WTC11 (cell line): ENCODE measurements at regions of chr19 and their contacts with region 1.

Region 1: DNA sequence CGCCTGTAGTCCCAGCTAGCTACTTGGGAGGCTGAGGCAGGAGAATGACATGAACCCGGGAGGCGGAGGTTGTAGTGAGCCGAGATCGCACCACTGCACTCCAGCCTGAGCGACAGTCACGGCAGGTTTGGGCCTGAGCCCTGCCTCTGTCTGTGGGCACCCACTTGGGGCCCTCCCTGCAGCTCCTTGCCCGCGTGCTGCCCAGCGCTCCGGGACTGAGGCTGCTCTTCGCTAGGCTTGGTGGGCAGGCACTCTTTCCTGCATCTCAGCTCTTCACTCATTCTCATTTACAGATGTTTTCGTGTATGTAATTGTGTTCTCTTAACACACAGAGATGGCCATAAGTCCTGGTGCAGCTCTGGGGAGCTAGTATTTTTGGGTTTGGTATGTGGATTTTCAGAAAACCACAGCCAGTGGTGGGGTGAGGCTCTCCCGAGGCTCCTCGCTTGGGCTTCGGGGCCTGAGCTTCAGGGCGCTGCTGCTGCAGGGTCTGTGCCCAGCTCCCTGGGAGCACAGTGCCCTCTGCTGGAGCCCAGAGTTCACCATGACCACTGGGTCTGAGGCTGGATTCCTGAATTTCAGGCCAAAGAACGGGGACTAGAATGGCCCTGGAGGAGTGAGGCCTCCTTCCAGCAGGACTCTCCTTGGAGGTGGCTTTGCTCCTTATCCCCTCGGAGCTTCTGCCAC is 15.2 kb downstream of the UPF1 start:
- DNase-seq: peak; percentile 87
- ATAC-seq: peak; percentile 96
- H3K4me3 Mint-ChIP-seq: no peak overlapping the region
- H3K27ac Mint-ChIP-seq: peak overlapping the region; percentile 96
- H3K4me1 Mint-ChIP-seq: peaks cover 2% of the 10 kb centered on the region
- H3K27me3 Mint-ChIP-seq: no peaks in the 10 kb centered on the region
- CTCF ChIP-seq: peak; percentile 76; the same call in 1 of the 2 replicates

Region 2: GRCh38 chr19:18450931-18451845 is 395.8 kb before region 1 on chr19:
- CTCF ChIA-PET with region 1: interaction called, 11 read pairs
- POLR2A ChIA-PET with region 1: no interaction called
- DNase-seq: peak; percentile 95
- ATAC-seq: peak; percentile 83
- H3K4me3 Mint-ChIP-seq: no peak overlapping the region
- H3K27ac Mint-ChIP-seq: no peak overlapping the region; the same call in 1 of the 2 replicates
- H3K4me1 Mint-ChIP-seq: peaks cover 3% of the 10 kb centered on the region; the same call in 1 of the 2 replicates
- H3K27me3 Mint-ChIP-seq: no peaks in the 10 kb centered on the region
- CTCF ChIP-seq: peak; percentile 98

Region 3: DNA sequence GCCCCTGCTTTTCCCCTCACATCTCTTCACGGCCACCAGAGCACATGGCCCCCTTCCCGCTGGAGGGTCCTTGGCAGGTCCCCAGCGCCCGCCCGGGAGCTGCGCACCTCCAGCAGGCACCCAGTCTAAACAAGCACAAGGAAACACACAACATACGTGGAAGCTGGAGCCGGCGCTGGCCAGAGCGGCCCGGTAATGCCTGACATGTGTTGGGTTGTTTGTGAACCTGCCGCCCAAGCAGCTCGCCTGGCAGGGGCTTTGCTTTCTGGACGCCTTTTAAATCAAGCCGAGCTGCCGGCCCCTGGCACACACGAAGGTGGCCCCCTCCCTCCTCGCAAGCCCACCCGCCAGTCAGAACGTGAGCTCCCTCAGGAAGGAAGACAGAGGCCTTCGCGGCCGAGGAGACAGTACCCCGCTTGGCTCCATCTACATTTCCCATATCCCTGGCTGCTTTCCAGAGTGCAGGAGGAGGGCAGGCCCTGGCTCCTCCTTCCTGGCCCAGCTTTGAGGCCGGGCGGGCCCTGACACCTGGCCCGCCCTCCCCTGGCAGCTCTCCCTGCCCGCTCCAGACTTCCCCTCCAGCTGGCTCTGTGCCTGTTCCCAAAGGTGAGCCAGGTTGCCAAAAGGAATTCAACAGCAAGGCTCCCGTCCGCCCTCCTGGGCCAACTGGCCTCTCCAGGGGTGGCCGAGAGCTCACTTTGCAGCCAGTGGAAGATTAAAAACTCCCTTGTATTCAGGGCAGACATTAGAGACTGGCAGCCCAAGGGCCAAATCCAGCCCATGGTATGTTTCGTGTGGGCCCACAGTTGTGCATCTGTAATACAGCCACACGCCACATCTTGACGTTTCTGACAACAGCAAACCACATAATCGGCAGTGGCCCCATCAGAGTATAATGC is 84.6 kb before region 1 on chr19:
- CTCF ChIA-PET with region 1: interaction called, 13 read pairs
- POLR2A ChIA-PET with region 1: no interaction called
- DNase-seq: peak; percentile 38
- ATAC-seq: peak; percentile 75
- H3K4me3 Mint-ChIP-seq: no peak overlapping the region
- H3K27ac Mint-ChIP-seq: no peak overlapping the region
- H3K4me1 Mint-ChIP-seq: peaks cover 2% of the 10 kb centered on the region; the same call in 1 of the 2 replicates
- H3K27me3 Mint-ChIP-seq: peaks cover 58% of the 10 kb centered on the region
- CTCF ChIP-seq: no peak

Region 4: GRCh38 chr19:18785179-18786128 is 61.6 kb before region 1 on chr19:
- CTCF ChIA-PET with region 1: interaction called, 37 read pairs
- POLR2A ChIA-PET with region 1: no interaction called
- DNase-seq: peak; percentile 98
- ATAC-seq: peak; percentile 78
- H3K4me3 Mint-ChIP-seq: peak overlapping the region; percentile 56
- H3K27ac Mint-ChIP-seq: no peak overlapping the region
- H3K4me1 Mint-ChIP-seq: peaks cover 19% of the 10 kb centered on the region
- H3K27me3 Mint-ChIP-seq: peaks cover 100% of the 10 kb centered on the region
- CTCF ChIP-seq: no peak

Region 5: GRCh38 chr19:18831524-18832305 is 15.3 kb before region 1 on chr19 and contains the start of gene UPF1:
- CTCF ChIA-PET with region 1: interaction called, 64 read pairs
- POLR2A ChIA-PET with region 1: interaction called, 4 read pairs
- DNase-seq: peak; percentile 98
- ATAC-seq: peak; percentile 72
- H3K4me3 Mint-ChIP-seq: peak within 1 kb of the TSS; percentile 94
- H3K27ac Mint-ChIP-seq: peak within 1 kb of the TSS; percentile 84
- H3K4me1 Mint-ChIP-seq: peaks cover 24% of the 10 kb centered on the region
- H3K27me3 Mint-ChIP-seq: peaks cover 33% of the 10 kb centered on the region
- CTCF ChIP-seq: no peak
- total RNA-seq, gene UPF1: 77.3 to 82.5 TPM (median 81.9 TPM) in 3 replicates

Region 6: DNA sequence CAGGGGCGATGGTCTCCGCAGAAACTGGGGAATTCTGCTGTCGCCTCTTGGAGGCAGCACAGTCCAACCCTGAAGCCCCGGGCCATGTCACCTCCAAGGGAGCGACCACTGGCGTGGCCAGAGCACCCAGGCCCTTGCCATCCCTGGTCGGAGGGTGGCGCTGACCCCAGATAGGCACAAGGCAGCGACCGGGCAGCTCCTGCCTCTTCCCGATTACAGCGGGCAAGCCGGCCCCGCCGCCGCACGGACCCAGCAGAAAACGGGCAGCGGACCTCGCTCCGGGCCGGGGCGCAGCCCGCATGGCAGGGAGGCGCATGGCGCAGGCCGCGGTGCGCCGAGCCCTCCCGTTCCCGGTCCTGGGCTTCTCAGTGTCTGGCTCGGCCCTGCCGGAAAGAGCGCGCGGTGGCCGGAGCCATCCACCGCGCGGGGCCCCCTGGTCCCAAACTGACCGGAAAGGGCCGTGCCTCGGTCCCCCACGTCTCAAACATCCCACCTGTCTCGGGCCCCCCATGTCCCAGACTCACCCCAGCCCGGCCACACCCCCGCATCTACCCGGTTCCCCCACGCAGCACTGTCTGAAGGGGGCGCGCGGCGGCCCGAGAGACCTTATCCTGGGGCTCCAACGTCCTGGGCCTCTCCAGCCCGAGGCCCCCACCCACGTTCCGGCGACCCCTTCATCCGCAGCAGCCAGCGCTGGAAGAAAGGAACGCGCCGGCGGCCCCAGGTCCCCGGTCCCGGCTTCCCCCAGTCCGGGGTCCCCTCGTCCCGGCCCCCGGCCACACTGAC is 48.2 kb after region 1 on chr19:
- CTCF ChIA-PET with region 1: interaction called, 10 read pairs
- POLR2A ChIA-PET with region 1: no interaction called
- DNase-seq: peak; percentile 78
- ATAC-seq: peak; percentile 65
- H3K4me3 Mint-ChIP-seq: peak overlapping the region; percentile 72
- H3K27ac Mint-ChIP-seq: no peak overlapping the region
- H3K4me1 Mint-ChIP-seq: no peaks in the 10 kb centered on the region
- H3K27me3 Mint-ChIP-seq: peaks cover 16% of the 10 kb centered on the region
- CTCF ChIP-seq: peak; percentile 15; the same call in 1 of the 2 replicates

Region 7: GRCh38 chr19:18908917-18909619 is 62.1 kb after region 1 on chr19:
- CTCF ChIA-PET with region 1: no interaction called
- POLR2A ChIA-PET with region 1: no interaction called
- DNase-seq: no peak
- ATAC-seq: no peak
- H3K4me3 Mint-ChIP-seq: no peak overlapping the region
- H3K27ac Mint-ChIP-seq: no peak overlapping the region
- H3K4me1 Mint-ChIP-seq: no peaks in the 10 kb centered on the region
- H3K27me3 Mint-ChIP-seq: no peaks in the 10 kb centered on the region
- CTCF ChIP-seq: no peak